Posterior cingulate gyrus (tissue), 11 donors: ENCODE measurements at regions of chr11 and their contacts with region 1.

Region 1: DNA sequence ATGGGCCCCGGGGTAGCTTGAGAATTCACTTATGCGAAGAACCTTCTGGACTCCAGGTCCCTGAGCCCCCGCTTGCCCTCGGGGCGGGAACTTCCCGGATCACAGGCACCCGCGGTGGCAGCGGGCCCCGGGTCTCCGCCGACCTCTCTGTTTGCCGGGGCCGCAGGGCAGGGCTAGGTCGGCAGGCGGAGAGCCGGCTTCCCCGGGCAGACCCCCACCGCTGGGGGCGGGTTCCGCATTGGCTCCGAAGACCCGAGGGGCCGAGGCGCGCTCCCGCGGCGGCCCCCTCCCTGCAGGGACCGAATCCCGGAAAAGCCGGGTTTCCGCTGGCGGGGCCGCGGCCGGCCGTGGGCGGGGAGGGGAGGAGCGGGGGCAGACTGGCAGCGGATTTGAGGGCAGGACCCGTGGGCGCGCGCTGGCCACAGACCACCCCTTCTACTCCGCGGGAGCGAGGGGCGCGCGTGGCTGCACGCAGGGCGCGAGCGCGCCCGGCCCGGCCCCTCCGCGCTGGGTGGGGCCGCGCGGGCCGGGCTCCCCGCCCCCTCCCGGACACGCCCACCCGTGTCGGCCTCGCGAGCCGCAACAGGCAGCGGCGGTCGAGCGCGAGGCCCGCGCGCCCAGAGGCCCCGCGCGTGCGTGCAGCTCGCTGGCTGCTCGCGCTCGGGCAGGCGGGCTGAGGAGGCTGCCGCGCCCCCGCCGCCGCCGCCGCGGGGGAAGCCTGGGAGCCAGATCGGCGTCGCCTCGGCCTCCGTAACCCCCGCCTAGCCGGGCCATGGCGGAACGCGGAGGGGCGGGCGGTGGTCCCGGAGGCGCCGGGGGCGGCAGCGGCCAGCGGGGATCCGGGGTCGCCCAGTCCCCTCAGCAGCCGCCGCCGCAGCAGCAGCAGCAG is at the start of gene PACS1:
- DNase-seq: peak; percentile 51 to 95 (median 62)

Region 2: GRCh38 chr11:65764434-65764833 is 305.5 kb before region 1 on chr11:
- intact Hi-C with region 1: no loop called
- DNase-seq: no peak

Region 3: DNA sequence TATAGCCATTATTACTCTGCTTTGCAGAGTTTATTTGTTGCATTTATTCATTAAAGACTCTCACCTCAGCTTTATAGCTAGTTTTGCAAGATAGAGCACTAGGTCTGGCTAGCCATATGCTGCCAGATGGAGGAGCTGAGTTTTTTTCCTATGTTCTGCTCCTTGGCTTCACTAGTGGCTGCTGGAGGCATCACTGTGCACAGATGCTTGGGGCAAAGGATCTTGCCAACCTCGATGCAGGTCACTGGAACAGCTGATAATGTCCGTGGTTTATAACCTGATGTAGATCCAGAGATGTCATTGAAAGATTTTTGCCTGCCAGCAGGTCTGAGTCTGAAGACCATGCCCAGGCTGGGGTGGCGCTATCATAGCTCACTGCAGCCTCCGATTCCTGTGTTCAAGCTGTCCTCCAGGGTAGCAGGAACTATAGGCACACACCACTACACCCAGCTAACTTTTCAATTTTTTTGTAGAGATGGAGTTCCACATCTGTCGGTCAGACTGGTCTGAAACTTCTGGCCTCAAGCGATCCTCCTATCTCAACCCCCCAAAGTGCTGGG is 63.3 kb after region 1 on chr11:
- intact Hi-C with region 1: loop called (anchors 5 kb)
- DNase-seq: no peak